ENCODE measurements at regions of chr1 and their contacts with region 1.

Region 1: GRCh38 chr1:177948336-177948972 is 21.4 kb downstream of the SEC16B start:
- DNase-seq: peak; percentile 25 to 59
- ATAC-seq: peak; percentile 69 to 89
- H3K4me3 ChIP-seq: no peak overlapping the region
- H3K27ac ChIP-seq: no peak overlapping the region
- H3K4me1 ChIP-seq: no peaks in the 10 kb centered on the region
- H3K27me3 ChIP-seq: no peaks in the 10 kb centered on the region
- CTCF ChIP-seq: peak; percentile 74 to 91 (median 81)
- POLR2A ChIP-seq: no peak

Region 2: GRCh38 chr1:176897350-176898236 is 1050.9 kb before region 1 on chr1:
- in situ Hi-C with region 1: loop called in 2 of 4 experiments (anchors 25 kb)
- intact Hi-C with region 1: loop called (anchors 1 kb)
- DNase-seq: peak in 1 of 2 donors; percentile 18
- ATAC-seq: peak; percentile 54 to 76
- H3K4me3 ChIP-seq: peak overlapping the region in 3 of 4 donors; percentile 19 to 45 (median 36)
- H3K27ac ChIP-seq: no peak overlapping the region
- H3K4me1 ChIP-seq: no peaks in the 10 kb centered on the region
- H3K27me3 ChIP-seq: peaks cover 0 to 17% (median 3%) of the 10 kb centered on the region in 3 donors
- CTCF ChIP-seq: peak; percentile 36 to 78 (median 55)
- POLR2A ChIP-seq: no peak

Region 3: GRCh38 chr1:177228700-177229080 is 719.8 kb before region 1 on chr1:
- in situ Hi-C with region 1: loop called in 1 of 4 experiments (anchors 25 kb)
- intact Hi-C with region 1: no loop called
- DNase-seq: no peak
- ATAC-seq: no peak
- H3K4me3 ChIP-seq: no peak overlapping the region
- H3K27ac ChIP-seq: no peak overlapping the region
- H3K4me1 ChIP-seq: no peaks in the 10 kb centered on the region
- H3K27me3 ChIP-seq: no peaks in the 10 kb centered on the region
- CTCF ChIP-seq: no peak
- POLR2A ChIP-seq: no peak

Region 4: DNA sequence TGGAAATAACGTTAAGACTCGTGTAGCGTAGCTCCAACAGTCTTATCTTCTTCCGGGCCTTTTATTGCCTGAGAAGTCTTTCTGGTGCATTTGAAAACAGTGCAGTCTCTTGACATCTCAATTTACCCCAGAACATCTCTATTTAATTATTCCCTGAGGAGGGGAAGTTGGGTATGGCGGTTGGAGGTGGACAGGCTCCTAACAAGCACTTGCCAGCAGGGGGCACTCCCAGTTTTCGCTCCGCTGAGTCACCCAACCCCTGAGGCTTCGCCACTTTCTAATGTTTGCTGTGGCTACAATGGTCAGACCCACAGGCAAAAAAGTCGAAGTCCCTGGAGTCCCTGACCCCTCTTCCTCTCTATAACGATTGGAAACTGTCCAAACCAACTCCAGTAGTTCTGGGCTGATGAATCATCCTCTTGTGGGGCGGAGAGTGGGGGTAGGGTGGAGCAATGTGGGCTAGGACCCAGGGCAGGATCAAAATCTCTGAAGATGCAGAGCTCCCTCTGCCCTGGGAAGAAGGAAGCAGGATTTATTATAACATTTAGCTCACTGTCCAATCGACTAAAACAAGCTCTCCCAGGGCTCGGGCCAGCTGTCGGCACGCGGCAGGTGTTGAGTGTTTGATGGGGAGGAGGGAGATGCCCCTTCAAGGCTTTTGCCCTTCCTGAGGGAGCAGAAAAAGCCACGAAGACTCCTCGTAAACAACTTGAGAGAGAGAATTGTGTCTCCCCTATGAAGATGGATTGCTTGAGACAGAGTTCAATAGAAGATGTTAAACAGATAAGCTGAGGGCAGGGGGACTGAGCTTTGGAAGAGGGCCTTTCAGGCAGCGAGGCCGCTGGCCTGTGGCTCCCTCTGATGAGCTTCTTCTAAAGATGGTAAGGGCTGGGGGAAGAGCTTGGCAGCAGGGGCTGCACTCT is 692.0 kb before region 1 on chr1:
- in situ Hi-C with region 1: no loop called
- intact Hi-C with region 1: loop called (anchors 2 kb)
- DNase-seq: peak; percentile 20 to 58
- ATAC-seq: peak; percentile 82 to 92
- H3K4me3 ChIP-seq: no peak overlapping the region
- H3K27ac ChIP-seq: peak overlapping the region in 1 of 4 donors; percentile 35
- H3K4me1 ChIP-seq: peaks cover 5 to 7% of the 10 kb centered on the region in 2 donors
- H3K27me3 ChIP-seq: no peaks in the 10 kb centered on the region
- CTCF ChIP-seq: peak; percentile 64 to 78 (median 77)
- POLR2A ChIP-seq: no peak

Region 5: DNA sequence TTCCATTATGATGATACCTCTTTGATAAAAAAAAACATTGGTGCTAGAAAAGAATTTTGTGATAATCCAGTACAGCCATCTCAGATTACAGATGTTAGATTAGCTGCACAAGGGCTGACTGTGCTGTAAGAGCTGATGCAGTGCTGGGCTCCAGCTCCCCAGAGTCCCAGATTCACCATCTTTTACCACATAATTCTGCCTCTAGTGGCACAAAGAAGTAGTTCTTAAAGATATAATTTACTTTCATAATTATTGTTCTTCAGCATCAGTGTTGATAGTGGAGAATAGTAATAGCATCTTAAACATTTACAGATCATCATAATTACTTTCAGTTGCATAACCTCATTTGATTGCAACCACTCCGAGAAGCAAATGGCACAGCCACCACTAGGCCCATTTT is 515.6 kb before region 1 on chr1:
- in situ Hi-C with region 1: no loop called
- intact Hi-C with region 1: loop called (anchors 10 kb)
- DNase-seq: no peak
- ATAC-seq: no peak
- H3K4me3 ChIP-seq: no peak overlapping the region
- H3K27ac ChIP-seq: no peak overlapping the region
- H3K4me1 ChIP-seq: no peaks in the 10 kb centered on the region
- H3K27me3 ChIP-seq: no peaks in the 10 kb centered on the region
- CTCF ChIP-seq: no peak
- POLR2A ChIP-seq: no peak

Region 6: DNA sequence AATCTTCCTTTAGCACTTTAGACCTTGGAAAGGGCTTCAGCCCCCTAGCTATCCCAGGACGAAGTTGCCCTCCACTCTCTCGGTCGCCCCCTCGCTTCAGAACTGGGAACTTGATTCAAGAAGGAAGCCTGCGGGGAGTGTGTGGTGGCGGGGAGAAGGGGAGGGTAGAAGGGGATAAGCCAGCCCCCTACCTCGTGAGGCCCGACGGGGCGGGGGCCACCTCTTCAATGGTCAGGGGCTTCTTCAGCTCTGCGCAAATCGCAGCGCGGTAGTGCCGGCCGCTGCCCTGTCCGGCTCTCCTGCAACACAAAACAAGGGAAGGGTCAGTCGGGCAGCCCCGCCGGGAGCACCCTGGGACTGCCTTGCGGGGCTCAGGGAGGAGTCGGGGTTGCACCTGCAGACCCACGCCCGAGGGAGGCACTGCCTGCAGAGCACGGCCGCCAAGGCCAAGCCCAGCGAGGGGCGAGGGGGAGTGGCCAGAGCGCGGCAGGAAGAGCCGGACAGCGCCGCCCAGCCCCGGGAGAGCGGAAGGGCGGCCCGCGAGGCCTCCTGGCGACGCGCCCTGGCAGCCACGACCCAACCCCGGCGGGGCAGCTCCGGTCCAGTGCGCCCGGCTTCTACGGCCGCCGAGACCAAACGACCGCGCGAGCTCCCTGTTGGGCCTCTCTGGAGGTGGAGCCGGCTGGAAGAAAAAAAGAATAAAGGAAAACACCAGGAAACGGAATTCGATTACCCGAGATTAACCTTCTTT is 89.2 kb after region 1 on chr1:
- in situ Hi-C with region 1: loop called in 1 of 4 experiments (anchors 10 kb)
- intact Hi-C with region 1: loop called (anchors 5 kb)
- DNase-seq: peak; percentile 70 to 81
- ATAC-seq: peak; percentile 89 to 92
- H3K4me3 ChIP-seq: peak overlapping the region; percentile 61 to 92 (median 87)
- H3K27ac ChIP-seq: peak overlapping the region; percentile 80 to 89 (median 83)
- H3K4me1 ChIP-seq: peaks cover 24 to 44% of the 10 kb centered on the region in 2 donors
- H3K27me3 ChIP-seq: no peaks in the 10 kb centered on the region
- CTCF ChIP-seq: peak; percentile 33 to 68 (median 55)
- POLR2A ChIP-seq: no peak

Region 7: GRCh38 chr1:178109348-178110143 is 161.1 kb after region 1 on chr1:
- in situ Hi-C with region 1: no loop called
- intact Hi-C with region 1: no loop called
- DNase-seq: no peak
- ATAC-seq: no peak
- H3K4me3 ChIP-seq: no peak overlapping the region
- H3K27ac ChIP-seq: no peak overlapping the region
- H3K4me1 ChIP-seq: no peaks in the 10 kb centered on the region
- H3K27me3 ChIP-seq: no peaks in the 10 kb centered on the region
- CTCF ChIP-seq: no peak
- POLR2A ChIP-seq: no peak

Measured in gastrocnemius medialis (tissue), 4 donors.